Activated naive CD4-positive, alpha-beta T cell treated with anti-CD3 and anti-CD28 coated beads, Interleukin-2, amount 10 ng/mL, durations not matched to agents 7 days and 5 days (primary cell): ENCODE measurements at regions of chr4 and their contacts with region 1.

Region 1: DNA sequence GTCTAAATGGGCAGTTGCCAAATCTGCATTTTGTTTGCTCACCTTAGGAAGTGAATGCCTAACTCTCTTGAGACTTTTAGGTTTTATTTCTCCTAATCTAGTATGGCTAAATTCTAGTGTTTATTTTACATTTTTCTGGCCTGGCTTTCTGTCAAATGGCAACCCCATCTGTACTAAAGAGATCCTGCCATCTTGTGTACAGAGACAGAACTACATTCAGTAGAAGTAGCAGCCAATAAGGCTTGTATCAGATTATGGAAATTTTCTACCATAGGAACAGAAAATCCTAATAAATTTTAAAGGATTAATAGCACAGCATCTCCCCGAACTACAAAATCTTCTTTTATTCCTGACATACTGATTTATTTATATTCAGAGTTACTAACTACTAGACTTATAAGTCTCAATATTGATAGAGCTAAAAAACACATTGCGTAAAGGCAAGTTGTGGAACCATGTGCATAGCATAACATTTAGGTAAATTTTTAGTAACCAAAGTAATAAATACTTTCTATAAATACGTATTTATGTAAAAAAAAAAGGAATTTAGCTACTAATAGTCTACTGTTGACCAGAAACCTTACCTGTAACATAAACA is 45.5 kb downstream of the TMEM144 start:
- DNase-seq: no peak
- H3K4me3 Mint-ChIP-seq: no peak overlapping the region
- H3K27ac Mint-ChIP-seq: no peak overlapping the region
- H3K4me1 Mint-ChIP-seq: peaks cover 2% of the 10 kb centered on the region
- H3K27me3 Mint-ChIP-seq: peaks cover 7% of the 10 kb centered on the region

Region 2: GRCh38 chr4:158193171-158193749 is 62.6 kb before region 1 on chr4:
- CTCF ChIA-PET with region 1: interaction called, 26 read pairs
- DNase-seq: no peak
- H3K4me3 Mint-ChIP-seq: no peak overlapping the region
- H3K27ac Mint-ChIP-seq: no peak overlapping the region
- H3K4me1 Mint-ChIP-seq: no peaks in the 10 kb centered on the region
- H3K27me3 Mint-ChIP-seq: no peaks in the 10 kb centered on the region